IMR-90 (cell line): ENCODE measurements at regions of chr14 and their contacts with region 1.

Region 1: GRCh38 chr14:69715725-69716477 is 51.0 kb upstream of the SRSF5 start:
- DNase-seq: peak; percentile 70
- ATAC-seq: peak; percentile 6
- H3K4me3 ChIP-seq: no peak overlapping the region
- H3K27ac ChIP-seq: peak overlapping the region; percentile 32
- H3K4me1 ChIP-seq: peaks cover 37% of the 10 kb centered on the region
- H3K27me3 ChIP-seq: no peaks in the 10 kb centered on the region
- CTCF ChIP-seq: no peak
- POLR2A ChIP-seq: no peak
- RAD21 ChIP-seq: no peak

Region 2: GRCh38 chr14:69428289-69428998 is 287.5 kb before region 1 on chr14:
- CTCF ChIA-PET with region 1: no interaction called
- POLR2A ChIA-PET with region 1: no interaction called
- dilution Hi-C with region 1: no loop called
- in situ Hi-C with region 1: no loop called
- intact Hi-C with region 1: no loop called
- DNase-seq: no peak
- ATAC-seq: no peak
- H3K4me3 ChIP-seq: no peak overlapping the region
- H3K27ac ChIP-seq: no peak overlapping the region
- H3K4me1 ChIP-seq: peaks cover 5% of the 10 kb centered on the region; the same call in 1 of the 2 replicates
- H3K27me3 ChIP-seq: no peaks in the 10 kb centered on the region
- CTCF ChIP-seq: no peak
- POLR2A ChIP-seq: no peak
- RAD21 ChIP-seq: no peak

Region 3: DNA sequence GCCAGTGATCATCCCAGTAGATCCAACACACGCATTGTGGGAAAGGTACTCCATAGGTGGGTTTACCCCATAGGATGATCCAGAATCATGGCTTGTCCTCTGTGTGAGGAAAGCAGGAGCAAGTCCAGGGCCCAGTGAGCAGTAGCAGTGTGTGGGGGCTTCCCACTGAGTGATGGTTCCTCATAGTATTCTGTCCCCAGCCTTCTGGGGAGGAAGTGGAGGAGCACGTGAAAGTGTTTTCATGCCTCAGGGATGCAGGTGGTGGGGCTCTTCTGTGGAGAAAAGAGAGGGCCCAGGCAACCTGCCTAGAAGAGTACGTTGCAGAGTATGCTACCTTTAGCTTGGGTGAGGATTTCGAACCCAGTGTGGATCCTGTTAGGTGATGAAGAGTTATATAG is 48.0 kb before region 1 on chr14:
- CTCF ChIA-PET with region 1: no interaction called
- POLR2A ChIA-PET with region 1: no interaction called
- dilution Hi-C with region 1: no loop called
- in situ Hi-C with region 1: no loop called
- intact Hi-C with region 1: loop called (anchors 5 kb)
- DNase-seq: no peak
- ATAC-seq: no peak
- H3K4me3 ChIP-seq: no peak overlapping the region
- H3K27ac ChIP-seq: peak overlapping the region; percentile 32; the same call in 1 of the 2 replicates
- H3K4me1 ChIP-seq: peaks cover 30% of the 10 kb centered on the region
- H3K27me3 ChIP-seq: no peaks in the 10 kb centered on the region
- CTCF ChIP-seq: no peak
- POLR2A ChIP-seq: no peak
- RAD21 ChIP-seq: no peak